MCF 10A (cell line): ENCODE measurements at regions of chrX and their contacts with region 1.

Region 1: DNA sequence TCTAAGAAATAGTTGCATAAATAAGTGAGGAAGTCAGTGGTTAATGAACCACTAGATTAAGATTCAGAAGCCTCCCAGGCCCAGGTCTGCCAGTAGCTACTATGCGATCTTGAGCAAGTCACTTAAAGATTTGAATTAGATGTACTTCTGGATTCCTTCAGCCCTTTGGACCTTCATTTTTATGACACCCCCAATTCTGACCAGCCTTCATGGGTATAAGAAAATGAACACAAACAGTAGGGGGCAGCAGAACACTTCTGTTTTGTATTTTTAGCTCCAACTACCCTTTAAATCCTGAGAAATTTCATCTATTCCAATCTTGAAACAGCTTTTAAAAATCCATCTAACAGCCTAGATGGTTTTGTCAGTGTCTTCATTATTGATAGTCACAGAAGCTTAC is 19.0 kb downstream of the TMEM47 start:
- DNase-seq: peak; percentile 57
- H3K4me3 Mint-ChIP-seq: no peak overlapping the region
- H3K27ac Mint-ChIP-seq: no peak overlapping the region
- H3K4me1 Mint-ChIP-seq: no peaks in the 10 kb centered on the region
- H3K27me3 Mint-ChIP-seq: peaks cover 32% of the 10 kb centered on the region
- CTCF ChIP-seq: peak; percentile 66

Region 2: DNA sequence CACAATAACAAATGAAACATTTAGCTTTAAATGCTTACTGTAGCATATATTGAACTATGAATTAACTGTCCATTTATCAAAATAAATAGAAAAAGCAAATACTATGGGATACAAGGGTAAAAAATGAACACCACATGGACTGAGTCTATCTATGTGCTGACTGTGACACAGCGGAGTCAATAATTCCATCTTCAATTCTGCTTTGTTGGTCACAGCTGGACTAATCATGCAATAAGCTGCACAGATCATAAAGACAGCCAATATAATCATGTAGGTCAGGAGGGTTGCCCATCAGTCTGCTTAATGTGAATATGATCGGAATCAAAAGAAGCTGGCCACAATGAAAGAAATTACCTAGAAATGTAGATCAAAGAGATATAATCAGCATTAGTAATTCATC is 410.3 kb before region 1 on chrX:
- CTCF ChIA-PET with region 1: no interaction called
- POLR2A ChIA-PET with region 1: no interaction called
- intact Hi-C with region 1: no loop called
- DNase-seq: no peak
- H3K4me3 Mint-ChIP-seq: no peak overlapping the region
- H3K27ac Mint-ChIP-seq: no peak overlapping the region
- H3K4me1 Mint-ChIP-seq: no peaks in the 10 kb centered on the region
- H3K27me3 Mint-ChIP-seq: no peaks in the 10 kb centered on the region
- CTCF ChIP-seq: no peak

Region 3: GRCh38 chrX:34365482-34365881 is 272.6 kb before region 1 on chrX:
- CTCF ChIA-PET with region 1: interaction called, 3 read pairs
- POLR2A ChIA-PET with region 1: no interaction called
- intact Hi-C with region 1: loop called (anchors 5 kb)
- DNase-seq: peak; percentile 59
- H3K4me3 Mint-ChIP-seq: no peak overlapping the region
- H3K27ac Mint-ChIP-seq: no peak overlapping the region
- H3K4me1 Mint-ChIP-seq: peaks cover 4% of the 10 kb centered on the region
- H3K27me3 Mint-ChIP-seq: peaks cover 21% of the 10 kb centered on the region
- CTCF ChIP-seq: peak; percentile 34

Region 4: DNA sequence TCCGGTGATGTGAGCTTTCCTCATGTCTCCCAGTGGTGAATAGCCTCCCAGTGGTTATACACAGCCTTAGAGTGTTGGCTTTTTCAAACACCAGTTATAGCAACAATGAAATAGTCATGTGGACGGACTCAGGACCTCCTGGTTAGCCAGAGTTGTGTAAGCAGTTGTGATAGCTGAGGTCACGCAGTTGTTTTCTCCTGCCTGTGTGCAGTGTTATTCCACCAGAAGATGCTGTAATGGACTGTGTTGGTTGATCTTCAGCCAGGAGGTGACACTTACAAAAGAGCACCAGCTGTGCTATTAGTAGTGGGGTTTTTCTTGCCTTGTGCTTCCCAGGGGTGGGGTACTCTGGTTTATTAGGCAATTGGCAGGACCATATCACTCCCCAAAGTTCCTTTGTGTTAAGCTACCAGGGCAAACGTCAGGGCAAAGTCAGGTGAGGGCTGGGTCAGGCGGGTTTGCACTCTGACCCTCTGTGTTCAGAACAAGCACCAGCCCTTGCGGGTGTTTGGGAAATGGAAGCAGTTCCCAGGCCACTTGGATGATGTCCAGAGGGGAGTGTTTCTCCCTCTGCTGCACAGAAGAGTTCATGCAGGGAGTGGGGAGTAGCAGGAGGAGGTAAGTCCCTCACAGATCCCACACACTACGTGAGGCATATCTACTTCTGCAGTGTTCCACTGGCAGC is 233.6 kb before region 1 on chrX:
- CTCF ChIA-PET with region 1: no interaction called
- POLR2A ChIA-PET with region 1: no interaction called
- intact Hi-C with region 1: no loop called
- DNase-seq: no peak
- H3K4me3 Mint-ChIP-seq: no peak overlapping the region
- H3K27ac Mint-ChIP-seq: no peak overlapping the region
- H3K4me1 Mint-ChIP-seq: no peaks in the 10 kb centered on the region
- H3K27me3 Mint-ChIP-seq: peaks cover 11% of the 10 kb centered on the region
- CTCF ChIP-seq: no peak

Region 5: DNA sequence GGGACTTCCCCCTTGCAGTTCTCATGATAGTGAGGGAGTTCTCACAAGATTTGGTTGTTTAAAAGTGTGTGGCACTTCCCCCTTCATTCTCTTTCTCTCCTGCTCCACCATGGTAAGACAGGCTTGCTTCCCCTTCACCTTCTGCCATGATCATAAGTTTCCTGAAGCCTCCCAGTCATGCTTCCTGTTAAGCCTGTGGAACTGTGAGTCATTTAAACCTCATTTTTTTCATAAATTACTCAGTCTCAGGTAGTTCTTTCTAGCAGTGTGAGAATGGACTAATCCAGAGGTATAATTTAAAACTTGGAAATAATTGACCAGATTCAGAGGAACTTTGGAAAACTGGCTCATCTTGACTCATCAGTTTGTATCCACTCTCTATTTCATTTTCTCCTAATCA is 110.0 kb before region 1 on chrX:
- CTCF ChIA-PET with region 1: no interaction called
- POLR2A ChIA-PET with region 1: no interaction called
- intact Hi-C with region 1: no loop called
- DNase-seq: peak; percentile 3
- H3K4me3 Mint-ChIP-seq: no peak overlapping the region
- H3K27ac Mint-ChIP-seq: peak overlapping the region; percentile 8
- H3K4me1 Mint-ChIP-seq: no peaks in the 10 kb centered on the region
- H3K27me3 Mint-ChIP-seq: peaks cover 12% of the 10 kb centered on the region
- CTCF ChIP-seq: no peak